Activated naive CD4-positive, alpha-beta T cell treated with anti-CD3 and anti-CD28 coated beads for 36 hours (primary cell): ENCODE measurements at regions of chr15 and their contacts with region 1.

Region 1: DNA sequence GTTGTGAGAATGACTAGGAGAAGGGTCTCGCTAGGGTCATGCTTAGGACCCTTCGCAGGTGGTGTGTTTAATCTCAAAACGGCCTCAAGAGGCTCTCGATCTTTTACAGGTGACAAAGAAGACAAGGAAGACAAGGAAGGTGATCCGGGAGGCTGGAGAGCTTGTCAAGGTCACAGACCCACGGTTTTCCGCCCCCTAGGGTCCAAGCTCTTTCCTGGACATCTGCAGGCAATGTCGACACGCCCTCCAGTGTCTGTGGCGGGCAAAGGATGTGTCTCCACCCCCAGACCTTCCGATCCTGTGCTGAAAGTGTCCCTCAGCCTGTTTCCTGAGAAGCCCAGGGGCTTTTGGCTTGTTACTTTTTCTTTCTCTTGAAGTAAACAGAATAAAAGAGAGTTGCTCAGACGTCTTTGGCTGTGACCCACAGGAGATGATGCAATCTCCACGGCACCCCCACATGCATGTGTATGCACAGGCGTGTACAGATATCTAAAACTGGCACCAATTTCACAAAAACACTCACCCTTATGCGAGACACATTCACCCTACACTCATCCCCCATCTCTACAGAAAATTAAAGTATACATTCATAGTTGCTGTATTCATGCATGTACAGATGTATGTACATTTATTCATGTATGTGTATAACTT is 108.8 kb downstream of the KLF13 start:
- DNase-seq: peak; percentile 93
- H3K4me3 Mint-ChIP-seq: peak overlapping the region; percentile 61
- H3K27ac Mint-ChIP-seq: peak overlapping the region; percentile 95
- H3K4me1 Mint-ChIP-seq: peaks cover 69% of the 10 kb centered on the region
- H3K27me3 Mint-ChIP-seq: no peaks in the 10 kb centered on the region

Region 2: GRCh38 chr15:30903497-30904201 is 531.7 kb before region 1 on chr15 and contains the start of gene FAN1:
- CTCF ChIA-PET with region 1: no interaction called
- intact Hi-C with region 1: loop called (anchors 1 kb)
- DNase-seq: peak; percentile 89
- H3K4me3 Mint-ChIP-seq: peak within 1 kb of the TSS; percentile 86
- H3K27ac Mint-ChIP-seq: peak within 1 kb of the TSS; percentile 74
- H3K4me1 Mint-ChIP-seq: peaks cover 30% of the 10 kb centered on the region
- H3K27me3 Mint-ChIP-seq: no peaks in the 10 kb centered on the region
- total RNA-seq, gene FAN1: 13.8 to 14.5 TPM

Region 3: DNA sequence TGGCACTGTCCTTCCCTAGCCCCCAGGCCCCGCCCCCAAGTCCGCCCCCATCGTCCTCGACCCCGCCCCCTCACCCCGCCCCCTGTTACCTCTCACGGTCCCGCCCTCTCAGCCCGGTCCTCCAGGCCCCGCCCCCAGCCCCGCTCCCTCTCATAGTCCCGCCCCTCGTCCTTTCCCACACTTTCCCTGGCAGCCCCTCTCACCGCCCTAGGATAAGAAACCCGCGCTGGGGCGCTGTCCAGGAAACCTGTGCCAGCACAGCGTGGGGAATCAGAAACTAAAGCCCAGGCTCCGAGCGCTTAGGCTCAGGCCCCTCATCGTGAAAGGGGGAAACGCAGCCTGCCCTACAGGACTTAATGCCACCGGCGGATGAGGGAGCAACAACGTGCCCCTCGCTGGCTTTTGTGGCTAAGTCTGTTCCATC is 354.8 kb before region 1 on chr15:
- CTCF ChIA-PET with region 1: no interaction called
- intact Hi-C with region 1: no loop called
- DNase-seq: peak; percentile 29
- H3K4me3 Mint-ChIP-seq: no peak overlapping the region
- H3K27ac Mint-ChIP-seq: no peak overlapping the region
- H3K4me1 Mint-ChIP-seq: peaks cover 2% of the 10 kb centered on the region
- H3K27me3 Mint-ChIP-seq: peaks cover 11% of the 10 kb centered on the region

Region 4: GRCh38 chr15:31200735-31201151 is 234.6 kb before region 1 on chr15:
- CTCF ChIA-PET with region 1: interaction called, 15 read pairs
- intact Hi-C with region 1: loop called (anchors 1 kb)
- DNase-seq: peak; percentile 88
- H3K4me3 Mint-ChIP-seq: no peak overlapping the region
- H3K27ac Mint-ChIP-seq: no peak overlapping the region
- H3K4me1 Mint-ChIP-seq: peaks cover 20% of the 10 kb centered on the region
- H3K27me3 Mint-ChIP-seq: no peaks in the 10 kb centered on the region

Region 5: DNA sequence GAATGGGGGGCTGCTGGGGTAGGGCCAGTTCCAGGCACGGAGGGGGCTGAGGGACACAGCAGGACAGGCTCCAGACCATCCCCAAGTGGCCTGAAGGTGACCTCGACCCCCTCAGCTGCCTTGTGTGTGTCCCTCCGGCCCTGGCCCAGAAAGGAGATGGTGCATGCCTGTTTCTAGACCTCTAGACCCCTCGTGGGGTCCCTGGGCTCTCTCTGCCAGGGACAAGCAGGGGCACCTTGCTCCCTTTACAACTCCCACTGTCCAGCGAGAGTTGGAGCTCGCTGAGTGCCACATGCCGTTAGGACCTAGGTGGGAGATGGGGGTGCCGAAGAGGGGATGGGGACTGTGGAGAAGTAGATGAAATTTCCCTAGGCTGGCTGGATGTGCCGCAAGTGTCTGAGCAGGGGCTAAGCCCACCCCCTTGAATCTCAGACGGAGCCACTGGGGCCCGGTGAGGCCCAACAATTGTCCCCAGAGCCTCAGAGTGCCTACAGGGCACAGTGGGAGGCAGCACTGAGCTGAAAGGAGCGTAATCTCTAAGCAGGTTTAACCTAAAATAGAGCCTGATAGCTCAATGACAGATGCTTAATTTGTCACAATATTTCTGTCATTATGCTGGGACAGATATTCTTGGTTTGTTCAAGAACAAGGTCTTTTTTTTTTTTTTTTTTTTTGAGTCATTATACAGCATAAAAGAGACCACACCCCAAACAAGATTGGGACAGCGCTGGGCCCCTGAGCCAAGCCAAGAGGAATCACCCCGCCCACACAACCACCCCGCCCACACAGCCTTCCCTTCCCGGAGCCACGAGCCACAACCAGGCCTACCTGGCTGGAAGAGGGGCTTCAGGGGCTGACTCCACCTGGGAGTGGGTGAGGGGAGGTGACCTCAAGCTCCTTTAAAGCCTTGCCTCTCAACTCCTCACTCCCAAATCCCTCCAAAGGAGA is 132.3 kb before region 1 on chr15:
- CTCF ChIA-PET with region 1: interaction called, 8 read pairs
- intact Hi-C with region 1: loop called (anchors 1 kb)
- DNase-seq: peak; percentile 46
- H3K4me3 Mint-ChIP-seq: no peak overlapping the region
- H3K27ac Mint-ChIP-seq: no peak overlapping the region
- H3K4me1 Mint-ChIP-seq: peaks cover 27% of the 10 kb centered on the region
- H3K27me3 Mint-ChIP-seq: no peaks in the 10 kb centered on the region

Region 6: DNA sequence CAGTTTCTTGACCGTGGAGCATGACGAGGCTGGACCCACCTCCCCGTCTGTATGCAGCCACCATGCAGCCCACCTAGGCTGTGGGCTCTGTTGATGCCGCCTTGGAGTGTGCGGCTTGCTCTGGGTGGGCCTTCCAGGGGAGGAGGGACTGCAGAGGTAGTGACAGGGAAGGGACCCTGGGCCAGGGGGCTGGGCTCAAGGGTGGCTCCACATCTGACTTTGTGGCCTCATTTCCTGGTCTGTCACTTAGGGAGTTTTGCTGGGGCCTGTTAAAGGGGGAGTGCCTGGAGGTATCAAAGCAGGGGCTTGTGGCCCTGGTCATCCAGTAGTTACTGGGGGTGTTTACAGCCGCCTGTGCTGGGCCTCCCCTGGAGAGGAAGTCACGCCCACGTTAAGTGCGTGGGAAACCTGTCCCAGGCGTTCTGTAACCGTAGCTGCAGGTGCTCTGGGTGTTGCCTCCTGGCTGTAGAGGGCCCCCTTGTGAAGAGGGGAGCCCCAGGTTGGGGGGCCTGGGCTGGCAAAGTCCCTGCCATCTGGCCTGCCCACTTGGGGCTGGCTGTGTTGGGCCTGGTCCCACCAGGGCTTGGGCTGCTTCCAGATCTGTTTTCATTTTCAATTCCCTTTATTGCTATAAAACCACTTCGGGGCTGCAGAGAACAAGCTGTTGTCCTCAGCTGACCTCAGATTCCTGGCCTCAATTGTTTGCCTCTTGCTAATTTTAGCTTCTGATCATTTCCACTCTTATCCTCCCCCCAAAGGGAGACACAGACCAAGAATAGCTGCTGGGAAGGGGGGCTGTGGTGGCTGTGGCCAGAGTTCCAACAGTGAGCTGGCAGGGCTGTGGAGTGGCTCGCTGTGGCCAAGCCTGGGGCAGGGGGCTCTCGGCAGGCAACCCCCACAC is 82.2 kb before region 1 on chr15:
- CTCF ChIA-PET with region 1: interaction called, 165 read pairs
- intact Hi-C with region 1: loop called (anchors 1 kb)
- DNase-seq: peak; percentile 78
- H3K4me3 Mint-ChIP-seq: peak overlapping the region; percentile 57
- H3K27ac Mint-ChIP-seq: peak overlapping the region; percentile 95
- H3K4me1 Mint-ChIP-seq: peaks cover 98% of the 10 kb centered on the region
- H3K27me3 Mint-ChIP-seq: no peaks in the 10 kb centered on the region

Region 7: DNA sequence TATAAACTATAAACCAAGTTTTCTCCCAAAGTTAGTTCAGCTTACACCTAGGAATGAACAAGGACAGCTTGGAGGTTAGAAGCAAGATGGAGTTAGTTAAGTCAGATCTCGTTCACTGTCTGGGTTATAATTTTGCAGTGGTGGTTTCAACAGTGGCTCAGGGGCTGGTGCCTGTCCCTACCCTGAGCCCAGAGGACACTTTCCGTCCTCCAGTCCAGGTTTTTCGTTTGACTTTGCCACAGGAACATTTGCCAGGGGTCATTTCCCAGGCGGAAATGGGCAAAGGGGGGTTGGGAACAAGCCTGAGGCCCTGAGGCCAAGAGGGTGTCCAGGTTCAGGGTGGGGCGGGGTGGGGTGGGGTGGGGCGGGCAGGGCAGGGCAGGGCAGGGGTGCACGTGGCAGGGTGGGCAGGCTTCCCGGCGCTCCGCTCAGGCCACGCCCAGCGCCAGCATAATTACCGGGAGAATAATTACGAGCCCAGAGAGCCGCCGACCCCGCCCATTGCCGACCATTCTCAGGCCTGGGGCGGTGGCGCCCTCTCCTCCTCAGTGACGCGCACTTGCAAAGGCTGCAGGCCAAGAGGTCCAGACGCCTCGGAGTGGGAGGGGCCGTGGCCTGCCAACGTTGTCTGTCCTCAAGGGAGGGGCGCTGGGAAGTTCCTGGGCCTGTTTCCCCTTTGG is 38.4 kb before region 1 on chr15:
- CTCF ChIA-PET with region 1: interaction called, 16 read pairs
- intact Hi-C with region 1: loop called (anchors 1 kb)
- DNase-seq: no peak
- H3K4me3 Mint-ChIP-seq: no peak overlapping the region
- H3K27ac Mint-ChIP-seq: no peak overlapping the region
- H3K4me1 Mint-ChIP-seq: peaks cover 28% of the 10 kb centered on the region
- H3K27me3 Mint-ChIP-seq: peaks cover 2% of the 10 kb centered on the region

Region 8: DNA sequence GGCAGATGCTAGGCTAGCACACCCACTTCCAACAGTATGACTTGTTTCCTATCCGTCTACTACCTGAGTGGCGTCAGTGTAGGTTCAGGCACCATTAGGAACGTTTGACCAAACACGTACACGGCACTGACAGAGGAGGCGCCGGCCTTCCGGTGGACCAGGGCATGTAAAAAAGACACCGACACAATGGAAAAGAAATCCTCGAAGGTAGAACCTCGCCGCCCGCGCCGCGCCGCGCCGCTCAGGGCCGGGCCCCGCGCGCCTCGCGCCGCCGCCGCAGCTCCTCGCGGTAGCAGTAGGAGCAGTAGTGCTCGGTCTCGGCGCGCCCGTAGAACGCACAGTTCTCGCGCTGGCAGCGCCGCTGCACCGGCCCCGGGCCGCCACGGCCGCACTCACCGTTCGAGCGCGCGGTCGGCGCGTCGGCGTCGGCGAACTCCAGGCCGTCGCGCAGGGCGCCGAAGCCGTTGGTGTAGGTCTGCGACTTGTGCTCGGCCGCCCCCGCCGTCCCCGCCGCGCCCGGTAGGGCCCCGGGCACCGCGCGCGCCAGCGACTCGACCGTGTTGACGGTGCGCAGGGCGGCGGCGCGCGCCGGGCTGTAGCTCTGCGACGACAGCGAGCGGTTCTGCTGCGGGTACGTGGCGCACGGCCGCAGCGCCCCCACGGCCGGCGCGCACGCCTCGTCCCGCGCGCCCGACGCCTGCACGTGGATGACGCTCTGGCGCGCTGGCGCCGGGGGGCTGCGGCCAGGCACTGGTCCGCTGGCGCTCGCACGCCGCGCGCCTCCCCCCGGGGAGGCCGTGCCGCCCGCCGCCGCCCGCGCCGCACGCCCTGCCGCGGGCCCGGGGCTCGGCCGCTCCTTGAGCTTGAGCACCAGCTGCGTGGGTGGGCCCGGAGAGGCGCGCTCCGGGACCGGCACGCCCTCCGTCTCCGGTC is 47.9 kb after region 1 on chr15:
- CTCF ChIA-PET with region 1: interaction called, 348 read pairs
- intact Hi-C with region 1: loop called (anchors 1 kb)
- DNase-seq: peak; percentile 63
- H3K4me3 Mint-ChIP-seq: peak overlapping the region; percentile 92
- H3K27ac Mint-ChIP-seq: peak overlapping the region; percentile 91
- H3K4me1 Mint-ChIP-seq: peaks cover 33% of the 10 kb centered on the region
- H3K27me3 Mint-ChIP-seq: no peaks in the 10 kb centered on the region

Region 9: DNA sequence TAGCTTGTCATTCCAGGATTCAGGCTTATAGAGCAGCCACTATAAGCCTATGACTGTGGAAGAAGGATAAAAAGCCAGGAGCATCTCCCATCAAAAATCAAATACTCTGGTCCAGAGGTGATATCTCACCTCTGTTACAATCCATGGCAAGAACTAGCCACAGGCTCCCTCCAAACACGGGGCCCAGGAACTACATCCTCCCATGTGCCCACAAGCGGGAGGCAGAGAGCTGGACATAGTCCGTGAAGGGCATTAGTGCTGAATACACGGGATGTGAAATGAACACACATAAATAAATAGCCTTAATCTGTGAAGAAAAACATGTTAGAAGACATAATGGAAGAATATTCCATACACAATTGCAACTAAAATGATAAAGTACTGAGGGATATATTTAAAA is 140.2 kb after region 1 on chr15:
- CTCF ChIA-PET with region 1: no interaction called
- intact Hi-C with region 1: no loop called
- DNase-seq: no peak
- H3K4me3 Mint-ChIP-seq: no peak overlapping the region
- H3K27ac Mint-ChIP-seq: no peak overlapping the region
- H3K4me1 Mint-ChIP-seq: peaks cover 2% of the 10 kb centered on the region
- H3K27me3 Mint-ChIP-seq: no peaks in the 10 kb centered on the region